CD8-positive, alpha-beta T cell (primary cell): ENCODE measurements at regions of chr1 and their contacts with region 1.

Region 1: GRCh38 chr1:23634842-23635651 is 56.6 kb upstream of the RPL11 start:
- DNase-seq: peak in 7 of 9 experiments; percentile 29 to 83 (median 58)
- ATAC-seq: peak; percentile 92
- H3K4me3 ChIP-seq: peak overlapping the region; percentile 46 to 52
- H3K4me3 Mint-ChIP-seq: peak overlapping the region; percentile 76
- H3K27ac ChIP-seq: peak overlapping the region; percentile 5 to 18
- H3K27ac Mint-ChIP-seq: peak overlapping the region; percentile 92
- H3K4me1 ChIP-seq: peaks cover 25% of the 10 kb centered on the region
- H3K4me1 Mint-ChIP-seq: peaks cover 33% of the 10 kb centered on the region
- H3K27me3 ChIP-seq: no peaks in the 10 kb centered on the region
- H3K27me3 Mint-ChIP-seq: no peaks in the 10 kb centered on the region
- CTCF ChIP-seq: peak; percentile 89

Region 2: DNA sequence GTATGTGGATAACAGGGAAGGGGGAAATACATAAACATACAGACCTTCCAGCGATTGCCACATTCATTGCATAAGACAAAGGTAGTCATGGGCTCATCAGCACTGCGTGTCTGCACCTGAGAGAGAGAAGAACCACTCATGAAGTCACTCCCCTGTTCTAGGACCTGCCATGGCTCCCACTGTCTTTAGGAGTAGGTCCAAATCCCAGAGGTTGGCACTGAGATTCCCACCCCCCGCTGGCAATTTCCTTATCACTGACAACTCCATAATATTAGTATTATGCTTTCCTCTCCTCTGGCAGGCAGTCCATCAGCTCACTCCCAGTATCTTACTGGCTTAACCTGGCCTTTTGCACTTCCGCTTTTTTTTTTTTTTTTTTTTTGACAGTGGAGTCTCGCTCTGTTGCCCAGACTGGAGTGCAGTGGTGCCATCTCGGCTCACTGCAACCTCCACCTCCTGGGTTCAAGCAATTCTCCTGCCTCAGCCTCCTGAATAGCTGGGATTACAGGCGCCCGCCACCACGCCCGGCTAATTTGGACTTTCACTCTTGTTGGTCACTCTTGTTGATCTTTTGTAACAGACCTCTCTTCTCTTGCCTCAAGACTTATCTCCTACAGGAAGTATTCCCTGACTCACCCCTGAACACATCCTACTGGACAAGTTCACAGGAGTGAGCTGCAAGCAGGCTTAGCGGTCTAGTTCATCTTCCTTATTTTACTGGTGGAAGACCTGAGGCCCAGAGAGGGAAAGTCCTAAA is 250.6 kb before region 1 on chr1:
- CTCF ChIA-PET with region 1: no interaction called
- POLR2A ChIA-PET with region 1: no interaction called
- intact Hi-C with region 1: no loop called
- DNase-seq: no peak
- ATAC-seq: no peak
- H3K4me3 ChIP-seq: no peak overlapping the region
- H3K4me3 Mint-ChIP-seq: no peak overlapping the region
- H3K27ac ChIP-seq: no peak overlapping the region
- H3K27ac Mint-ChIP-seq: no peak overlapping the region
- H3K4me1 ChIP-seq: no peaks in the 10 kb centered on the region
- H3K4me1 Mint-ChIP-seq: no peaks in the 10 kb centered on the region
- H3K27me3 ChIP-seq: no peaks in the 10 kb centered on the region
- H3K27me3 Mint-ChIP-seq: no peaks in the 10 kb centered on the region
- CTCF ChIP-seq: no peak

Region 3: DNA sequence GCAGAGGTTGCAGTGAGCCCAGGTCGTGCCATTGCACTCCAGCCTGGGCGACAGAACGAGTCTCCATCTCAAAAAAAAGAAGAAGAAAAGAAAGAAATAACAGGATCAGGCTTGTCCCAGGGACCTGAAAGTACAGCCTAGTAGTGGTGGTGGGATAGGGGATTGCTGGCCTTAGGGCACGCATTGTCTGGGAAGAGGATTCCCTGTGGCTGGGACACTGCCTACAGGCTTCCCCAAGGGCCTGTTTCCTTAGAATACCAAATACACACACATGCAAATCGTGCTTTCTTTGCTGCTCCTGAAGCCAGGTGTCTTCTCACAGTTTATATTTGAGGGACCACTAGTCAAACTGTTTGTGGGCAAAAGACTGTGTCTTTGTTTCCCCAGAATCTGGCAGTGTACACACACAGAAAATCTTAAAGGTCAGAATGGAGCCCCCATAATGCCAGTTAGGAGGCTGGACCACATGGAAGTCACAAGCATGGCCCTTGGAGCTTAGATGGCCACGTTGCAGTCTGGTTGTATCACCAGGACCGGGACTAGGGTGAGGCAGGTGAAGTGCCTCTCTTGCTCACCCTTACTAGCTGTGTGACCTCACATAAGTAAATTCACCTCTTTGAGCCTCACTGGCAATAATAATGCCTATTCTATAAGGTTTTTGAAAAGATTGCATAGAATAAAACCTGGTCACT is 138.4 kb before region 1 on chr1:
- CTCF ChIA-PET with region 1: interaction called, 146 read pairs
- POLR2A ChIA-PET with region 1: interaction called, 8 read pairs
- intact Hi-C with region 1: loop called (anchors 1 to 2 kb)
- DNase-seq: no peak
- ATAC-seq: peak; percentile 23
- H3K4me3 ChIP-seq: no peak overlapping the region
- H3K4me3 Mint-ChIP-seq: no peak overlapping the region
- H3K27ac ChIP-seq: no peak overlapping the region
- H3K27ac Mint-ChIP-seq: no peak overlapping the region
- H3K4me1 ChIP-seq: no peaks in the 10 kb centered on the region
- H3K4me1 Mint-ChIP-seq: no peaks in the 10 kb centered on the region
- H3K27me3 ChIP-seq: no peaks in the 10 kb centered on the region
- H3K27me3 Mint-ChIP-seq: peaks cover 4% of the 10 kb centered on the region
- CTCF ChIP-seq: no peak

Region 4: DNA sequence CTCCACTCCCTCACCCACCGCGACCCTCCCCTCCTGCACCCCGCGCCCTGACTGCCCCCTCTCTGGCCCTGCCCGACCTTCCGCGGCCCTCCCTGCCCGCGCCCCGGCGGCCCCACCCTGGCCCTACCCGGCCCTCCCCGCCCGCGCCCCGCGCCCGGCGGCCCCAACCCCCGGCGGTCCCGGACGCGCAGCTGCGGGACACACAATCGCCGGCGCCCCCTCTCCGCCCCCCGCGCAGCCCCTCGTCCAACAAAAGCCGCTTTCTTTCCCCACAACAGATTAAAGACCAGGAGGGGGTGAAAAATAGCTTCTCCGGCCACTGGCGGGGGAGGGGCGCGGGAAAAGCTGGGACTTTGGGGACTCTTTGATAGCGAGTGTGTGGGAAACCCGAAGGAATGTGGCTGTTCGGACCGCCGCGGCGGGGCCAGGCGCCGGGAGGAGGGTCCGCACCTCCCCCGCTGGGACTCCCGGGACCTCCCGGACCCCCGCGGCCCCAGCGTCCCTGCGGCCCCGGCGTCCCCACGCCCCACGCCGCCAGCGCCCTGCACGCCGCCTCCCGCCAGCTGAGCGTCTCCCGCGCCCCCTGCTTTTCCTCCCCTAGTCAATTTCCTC is 66.9 kb before region 1 on chr1:
- CTCF ChIA-PET with region 1: interaction called, 84 read pairs
- POLR2A ChIA-PET with region 1: interaction called, 3 read pairs
- intact Hi-C with region 1: no loop called
- DNase-seq: no peak
- ATAC-seq: no peak
- H3K4me3 ChIP-seq: peak overlapping the region; percentile 44 to 46
- H3K4me3 Mint-ChIP-seq: peak overlapping the region; percentile 91
- H3K27ac ChIP-seq: no peak overlapping the region
- H3K27ac Mint-ChIP-seq: peak overlapping the region; percentile 50
- H3K4me1 ChIP-seq: peaks cover 10% of the 10 kb centered on the region
- H3K4me1 Mint-ChIP-seq: peaks cover 19% of the 10 kb centered on the region
- H3K27me3 ChIP-seq: peaks cover 0 to 9% of the 10 kb centered on the region in 2 experiments
- H3K27me3 Mint-ChIP-seq: peaks cover 5% of the 10 kb centered on the region
- CTCF ChIP-seq: no peak

Region 5: DNA sequence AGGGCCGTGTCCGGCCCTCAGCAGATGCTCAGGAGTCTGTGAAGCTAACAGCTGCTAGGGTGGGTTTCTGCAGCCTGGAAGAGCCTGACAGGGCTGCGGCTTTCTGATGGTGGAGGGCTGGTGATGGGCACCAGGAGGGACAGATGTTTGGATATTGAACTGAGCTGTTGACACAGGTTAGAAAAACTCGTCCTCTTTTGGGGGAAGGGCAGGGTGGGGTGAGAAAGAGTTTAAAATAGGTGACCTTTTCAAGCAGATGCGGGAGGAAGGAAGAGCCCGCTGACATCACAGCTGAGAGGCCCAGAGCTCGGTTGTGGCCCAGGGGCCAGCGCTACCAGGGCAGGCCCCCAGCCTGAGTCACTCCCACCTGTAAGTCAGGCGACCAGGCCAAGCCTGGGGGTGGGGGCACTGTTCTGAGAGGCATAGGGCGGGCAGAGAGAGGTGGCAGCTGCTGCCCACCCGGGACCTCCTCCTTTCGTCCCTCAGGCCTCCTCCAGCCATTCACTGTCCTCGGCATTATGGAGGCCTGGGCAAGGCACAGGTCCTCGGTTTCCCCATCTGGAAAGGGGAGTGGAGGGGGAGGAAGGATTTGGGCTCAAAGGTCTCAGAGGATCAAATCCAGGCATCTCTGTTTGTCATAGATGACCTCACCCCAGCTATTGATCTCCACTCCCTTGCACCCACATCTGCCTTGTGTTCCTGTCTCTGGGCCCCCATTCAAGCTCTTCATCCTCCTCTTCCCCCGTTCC is 43.4 kb before region 1 on chr1:
- CTCF ChIA-PET with region 1: interaction called, 207 read pairs
- POLR2A ChIA-PET with region 1: interaction called, 3 read pairs
- intact Hi-C with region 1: no loop called
- DNase-seq: peak in 5 of 9 experiments; percentile 34 to 63 (median 46)
- ATAC-seq: peak; percentile 82
- H3K4me3 ChIP-seq: no peak overlapping the region
- H3K4me3 Mint-ChIP-seq: peak overlapping the region; percentile 42
- H3K27ac ChIP-seq: peak overlapping the region in 1 of 2 experiments; percentile 41
- H3K27ac Mint-ChIP-seq: peak overlapping the region; percentile 83
- H3K4me1 ChIP-seq: peaks cover 62% of the 10 kb centered on the region
- H3K4me1 Mint-ChIP-seq: peaks cover 64% of the 10 kb centered on the region
- H3K27me3 ChIP-seq: no peaks in the 10 kb centered on the region
- H3K27me3 Mint-ChIP-seq: no peaks in the 10 kb centered on the region
- CTCF ChIP-seq: no peak

Region 6: DNA sequence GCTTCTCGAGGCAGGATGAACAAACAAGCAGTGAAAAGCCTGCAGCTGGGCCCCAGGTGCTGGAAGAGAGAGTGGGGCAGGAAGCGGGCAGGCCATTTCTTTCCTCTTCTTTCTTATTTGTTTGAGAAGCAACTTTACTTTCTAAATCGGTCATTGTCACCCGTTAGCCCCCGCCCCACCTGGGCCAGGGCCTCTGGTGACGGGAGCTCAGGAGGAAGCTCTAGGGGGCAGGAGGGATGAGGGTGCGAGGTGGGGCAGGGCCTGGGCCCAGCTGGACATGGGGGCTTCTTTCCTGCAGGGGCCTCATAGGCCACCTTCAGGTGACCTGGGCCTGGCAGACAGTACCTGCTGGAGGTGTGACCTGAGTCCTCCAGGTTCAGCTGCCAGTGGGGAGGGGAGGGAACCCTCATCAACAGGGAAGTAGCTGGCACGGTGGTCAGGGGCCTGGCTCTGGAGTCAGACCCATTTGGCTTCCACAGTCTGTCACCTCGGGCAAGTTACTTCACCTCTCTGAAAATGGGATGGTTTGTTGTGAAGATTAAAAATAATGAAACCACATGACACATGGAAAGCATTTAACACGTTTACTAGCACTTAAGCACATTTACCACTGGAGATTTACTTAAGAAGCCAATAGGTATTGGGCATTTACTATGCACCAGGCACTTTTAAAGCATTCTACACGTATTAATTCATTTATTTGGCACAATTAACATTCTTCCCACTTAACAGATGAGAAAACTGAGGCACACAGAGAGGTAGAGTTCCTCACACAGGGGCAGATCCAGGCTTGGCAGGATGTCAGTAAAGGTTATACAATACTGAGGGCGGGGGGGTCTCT is 21.6 kb before region 1 on chr1:
- CTCF ChIA-PET with region 1: interaction called, 125 read pairs
- POLR2A ChIA-PET with region 1: interaction called, 32 read pairs
- intact Hi-C with region 1: no loop called
- DNase-seq: peak in 7 of 9 experiments; percentile 33 to 78 (median 61)
- ATAC-seq: peak; percentile 61
- H3K4me3 ChIP-seq: peak overlapping the region in 1 of 2 experiments; percentile 8
- H3K4me3 Mint-ChIP-seq: peak overlapping the region; percentile 54
- H3K27ac ChIP-seq: peak overlapping the region; percentile 40 to 72
- H3K27ac Mint-ChIP-seq: peak overlapping the region; percentile 90
- H3K4me1 ChIP-seq: peaks cover 65% of the 10 kb centered on the region
- H3K4me1 Mint-ChIP-seq: peaks cover 83% of the 10 kb centered on the region
- H3K27me3 ChIP-seq: no peaks in the 10 kb centered on the region
- H3K27me3 Mint-ChIP-seq: no peaks in the 10 kb centered on the region
- CTCF ChIP-seq: no peak

Region 7: GRCh38 chr1:23756676-23757075 is 121.6 kb after region 1 on chr1:
- CTCF ChIA-PET with region 1: no interaction called
- POLR2A ChIA-PET with region 1: no interaction called
- intact Hi-C with region 1: no loop called
- DNase-seq: no peak
- ATAC-seq: no peak
- H3K4me3 ChIP-seq: no peak overlapping the region
- H3K4me3 Mint-ChIP-seq: no peak overlapping the region
- H3K27ac ChIP-seq: no peak overlapping the region
- H3K27ac Mint-ChIP-seq: no peak overlapping the region
- H3K4me1 ChIP-seq: no peaks in the 10 kb centered on the region
- H3K4me1 Mint-ChIP-seq: peaks cover 3% of the 10 kb centered on the region
- H3K27me3 ChIP-seq: no peaks in the 10 kb centered on the region
- H3K27me3 Mint-ChIP-seq: no peaks in the 10 kb centered on the region
- CTCF ChIP-seq: no peak